ENCODE measurements at regions of chr4 and their contacts with region 1.

Region 1: DNA sequence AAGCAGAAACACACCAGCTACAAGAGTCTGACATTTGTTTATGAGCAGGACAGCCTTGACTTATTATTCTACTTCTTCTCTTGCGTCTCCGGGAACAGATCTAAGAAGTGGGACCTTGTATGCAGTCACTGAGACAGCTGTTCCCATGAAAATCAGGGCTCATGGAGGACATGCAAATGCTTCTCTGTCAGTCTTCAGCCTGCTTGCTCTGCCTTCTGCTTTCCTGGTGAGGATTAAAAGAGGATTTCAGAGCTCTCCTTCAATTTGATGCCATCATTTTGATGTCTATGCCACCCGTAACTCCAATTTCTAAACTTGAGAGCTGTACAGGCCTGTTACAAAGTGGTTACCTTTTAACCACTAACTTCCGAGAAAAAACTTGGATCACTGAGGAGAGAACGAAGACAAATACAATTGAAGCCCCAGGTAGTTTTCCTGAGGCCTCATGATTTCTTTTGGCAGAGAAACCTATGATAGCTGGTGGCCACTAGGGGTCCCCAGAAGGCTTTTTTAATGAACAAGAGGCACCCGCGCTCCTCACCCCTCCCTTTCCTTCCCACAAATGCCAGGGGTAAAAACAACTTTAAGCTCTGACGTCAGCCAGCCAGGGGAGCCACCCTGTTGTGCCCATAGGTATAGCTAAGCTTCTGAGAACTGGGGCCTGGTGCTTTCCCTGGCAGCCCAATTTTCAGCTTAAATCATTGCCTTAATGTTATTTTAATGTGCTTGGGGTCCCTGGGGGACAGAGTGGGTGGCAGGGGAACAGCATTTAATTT is 97.0 kb downstream of the DDIT4L start:
- DNase-seq: peak; percentile 66
- H3K4me3 ChIP-seq: peak overlapping the region in 1 of 2 experiments; percentile 5; a peak in 1 of 4 replicates
- H3K27ac ChIP-seq: peak overlapping the region in 1 of 2 experiments; percentile 45; a peak in 1 of 4 replicates
- H3K4me1 ChIP-seq: peaks cover 3 to 8% of the 10 kb centered on the region in 2 experiments
- H3K27me3 ChIP-seq: no peaks in the 10 kb centered on the region
- CTCF ChIP-seq: peak; percentile 89
- EP300 ChIP-seq: no peak
- RAD21 ChIP-seq: peak; percentile 84

Region 2: DNA sequence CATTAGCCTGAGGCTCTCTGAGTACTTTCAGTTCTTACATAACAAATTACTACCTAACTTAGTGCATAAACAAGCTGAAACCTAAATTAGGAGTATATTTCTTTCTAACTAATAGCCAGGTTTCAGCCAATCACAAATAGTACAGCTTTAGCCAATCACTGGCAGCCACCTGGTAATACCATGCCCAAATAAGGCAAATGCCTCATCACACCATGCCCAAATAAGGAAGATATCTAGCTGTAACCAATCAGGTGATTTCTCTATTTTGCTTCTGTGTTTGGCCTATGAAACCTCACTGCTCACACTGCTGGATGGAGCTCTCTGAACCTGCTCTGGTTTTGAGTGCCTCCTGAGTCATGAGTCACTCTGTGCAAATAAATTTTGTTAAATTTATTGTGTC is 16.5 kb before region 1 on chr4:
- CTCF ChIA-PET with region 1: interaction called, 37 read pairs
- POLR2A ChIA-PET with region 1: no interaction called
- DNase-seq: no peak
- H3K4me3 ChIP-seq: no peak overlapping the region
- H3K27ac ChIP-seq: no peak overlapping the region
- H3K4me1 ChIP-seq: no peaks in the 10 kb centered on the region
- H3K27me3 ChIP-seq: no peaks in the 10 kb centered on the region
- CTCF ChIP-seq: no peak
- EP300 ChIP-seq: no peak
- RAD21 ChIP-seq: no peak

Region 3: DNA sequence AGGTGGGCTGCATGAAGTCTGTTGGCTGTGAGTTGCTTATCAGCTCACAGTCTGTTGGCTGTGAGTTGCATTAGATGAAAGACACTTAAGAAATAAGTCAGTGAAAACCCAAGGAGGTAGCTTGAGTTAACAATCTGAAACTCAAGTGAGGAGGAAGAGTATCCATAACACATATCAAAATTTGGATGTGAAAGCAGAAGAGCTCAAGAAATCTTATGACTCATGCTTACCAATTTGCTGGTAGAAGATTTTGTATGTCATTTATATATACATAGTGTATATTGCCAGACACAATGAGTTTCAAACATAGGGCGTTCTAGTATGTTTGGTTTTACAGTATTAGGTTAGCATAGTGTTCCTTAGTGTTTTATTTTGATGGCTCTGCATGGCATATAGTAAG is 10.4 kb before region 1 on chr4:
- CTCF ChIA-PET with region 1: interaction called, 37 read pairs
- POLR2A ChIA-PET with region 1: no interaction called
- DNase-seq: no peak
- H3K4me3 ChIP-seq: no peak overlapping the region
- H3K27ac ChIP-seq: no peak overlapping the region
- H3K4me1 ChIP-seq: no peaks in the 10 kb centered on the region
- H3K27me3 ChIP-seq: no peaks in the 10 kb centered on the region
- CTCF ChIP-seq: no peak
- EP300 ChIP-seq: no peak
- RAD21 ChIP-seq: no peak

Region 4: DNA sequence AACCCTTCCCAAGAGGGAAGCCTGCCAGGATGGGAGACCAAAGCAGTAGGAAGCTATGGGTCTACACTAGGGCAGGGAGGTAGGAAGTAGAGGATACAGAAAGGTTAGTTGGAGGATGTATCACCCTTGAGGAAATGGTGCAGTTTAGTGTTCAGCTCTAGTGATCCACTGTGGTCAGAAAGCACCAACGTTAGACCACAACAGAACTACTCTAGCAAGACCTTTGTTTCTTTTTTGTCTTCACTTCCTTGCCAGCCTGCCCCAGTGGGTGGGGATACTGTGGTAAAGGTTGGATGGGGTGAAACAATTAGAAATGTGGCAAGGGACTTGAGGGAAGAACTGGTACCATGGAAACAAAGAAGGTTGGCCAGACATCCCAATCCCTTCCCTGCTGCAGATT is 13.7 kb after region 1 on chr4:
- CTCF ChIA-PET with region 1: interaction called, 30 read pairs
- POLR2A ChIA-PET with region 1: no interaction called
- DNase-seq: no peak
- H3K4me3 ChIP-seq: no peak overlapping the region
- H3K27ac ChIP-seq: no peak overlapping the region
- H3K4me1 ChIP-seq: peaks cover 0 to 6% of the 10 kb centered on the region in 2 experiments; a peak in 3 of 4 replicates
- H3K27me3 ChIP-seq: no peaks in the 10 kb centered on the region
- CTCF ChIP-seq: no peak
- EP300 ChIP-seq: no peak
- RAD21 ChIP-seq: no peak